GM10248 (cell line): ENCODE measurements at regions of chr7 and their contacts with region 1.

Region 1: DNA sequence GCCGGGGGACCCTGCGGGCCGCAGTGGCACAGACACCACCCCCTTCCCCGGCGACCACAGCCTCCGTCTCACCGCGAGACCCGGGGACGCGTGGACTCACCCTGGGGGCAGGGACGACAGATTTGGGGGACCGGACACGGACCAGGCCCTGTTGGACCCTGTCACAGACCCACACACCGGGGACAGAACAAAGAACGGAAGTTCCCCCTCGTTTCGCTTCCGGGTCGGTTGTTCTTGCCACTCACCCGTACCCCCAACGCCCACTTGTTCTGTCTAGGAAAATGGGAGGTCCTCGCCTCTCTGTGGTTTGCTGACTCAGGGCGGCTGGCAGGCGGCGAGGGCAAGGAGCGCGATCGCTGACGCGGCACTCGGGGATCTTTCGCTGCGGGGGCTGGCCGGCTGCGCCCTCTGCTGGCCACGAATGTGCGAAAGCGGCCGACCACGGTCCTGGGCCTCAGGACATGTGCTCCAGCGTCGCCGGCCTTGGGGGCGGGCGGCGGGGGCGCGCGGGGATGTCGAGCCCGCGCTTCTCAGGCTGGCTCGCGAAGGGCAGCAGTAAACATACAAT is at the start of gene ZNF3:
- DNase-seq: peak; percentile 97
- CTCF ChIP-seq: peak; percentile 92

Region 2: GRCh38 chr7:100040575-100040974 is 41.0 kb before region 1 on chr7:
- CTCF ChIA-PET with region 1: no interaction called
- POLR2A ChIA-PET with region 1: no interaction called
- DNase-seq: no peak
- CTCF ChIP-seq: no peak

Region 3: GRCh38 chr7:100071018-100071723 is 10.4 kb before region 1 on chr7:
- CTCF ChIA-PET with region 1: interaction called, 10 read pairs
- POLR2A ChIA-PET with region 1: no interaction called
- DNase-seq: no peak
- CTCF ChIP-seq: no peak

Region 4: GRCh38 chr7:100101016-100101862 is 19.6 kb after region 1 on chr7 and contains the starts of genes AP4M1 and MCM7:
- CTCF ChIA-PET with region 1: interaction called, 14 read pairs
- POLR2A ChIA-PET with region 1: interaction called, 4 read pairs
- DNase-seq: peak; percentile 99
- CTCF ChIP-seq: no peak

Region 5: DNA sequence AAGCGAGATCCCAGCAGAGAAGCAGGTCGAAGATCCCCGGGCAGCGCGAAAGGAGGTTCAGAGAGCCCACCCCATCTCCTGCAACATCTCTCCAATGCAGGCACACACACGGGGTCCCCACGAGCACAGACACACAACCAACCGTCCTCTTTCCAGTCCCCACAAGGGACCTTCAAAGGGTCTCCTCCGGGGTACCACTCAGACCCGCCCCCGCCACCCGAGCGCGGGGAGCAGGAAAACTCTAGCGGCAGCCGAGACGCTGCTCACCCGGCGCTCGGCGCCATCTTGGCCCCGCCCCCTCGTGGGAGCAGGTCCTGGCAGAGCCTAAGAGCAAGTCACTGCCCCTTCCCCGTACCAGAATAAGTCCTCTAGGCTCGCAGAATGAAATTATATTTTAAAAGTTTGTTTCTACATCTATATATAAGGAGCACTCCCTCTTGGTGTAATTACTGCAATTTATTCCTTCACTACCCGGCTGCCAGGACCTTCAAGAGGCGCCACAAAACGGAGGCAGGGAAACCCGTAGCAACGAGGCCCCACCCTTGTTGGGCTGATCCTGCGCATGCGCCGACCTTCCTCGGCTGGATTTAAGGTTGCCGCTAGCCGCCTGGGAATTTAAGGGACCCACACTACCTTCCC is 37.6 kb after region 1 on chr7 and contains the starts of genes CNPY4 and TAF6:
- CTCF ChIA-PET with region 1: no interaction called
- POLR2A ChIA-PET with region 1: no interaction called
- DNase-seq: peak; percentile 99
- CTCF ChIP-seq: no peak

Region 6: DNA sequence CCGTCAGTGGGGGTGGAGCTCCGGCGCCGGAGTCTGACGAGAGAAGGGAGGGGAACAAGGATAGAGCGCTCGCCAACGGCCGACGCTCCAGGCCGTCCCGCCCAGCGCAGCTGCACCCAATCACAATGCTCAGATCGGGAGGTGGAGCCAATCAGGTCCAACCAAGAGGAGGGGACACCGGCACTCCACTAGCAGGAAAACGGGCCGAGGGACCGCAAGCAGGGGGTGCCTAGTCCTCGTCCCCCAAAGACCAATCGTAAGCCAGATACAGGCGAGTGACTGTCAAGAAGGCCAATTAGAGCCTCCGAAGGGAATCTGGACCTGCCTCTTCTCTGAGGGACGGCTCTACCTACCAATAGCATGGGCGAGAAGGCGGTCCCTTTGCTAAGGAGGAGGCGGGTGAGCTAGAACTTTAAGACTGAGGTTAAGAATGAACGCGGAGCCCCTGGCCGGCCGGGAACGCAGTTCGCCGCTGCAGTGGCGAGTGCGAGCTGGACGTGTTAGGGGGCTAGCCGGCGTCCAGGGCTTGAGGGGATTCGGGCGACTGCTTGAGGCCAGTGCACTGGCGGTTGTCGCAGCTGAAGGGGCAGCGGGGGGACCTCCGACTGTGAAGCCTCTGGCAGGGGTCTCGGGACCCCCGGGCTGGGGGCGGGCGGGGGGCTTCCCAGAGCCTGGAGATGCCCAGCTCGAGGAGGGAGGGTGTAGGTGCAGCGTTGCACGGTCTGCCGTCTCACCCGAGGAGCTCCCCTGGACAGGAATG is 504.8 kb after region 1 on chr7 and contains the start of gene FBXO24:
- CTCF ChIA-PET with region 1: no interaction called
- POLR2A ChIA-PET with region 1: no interaction called
- DNase-seq: peak; percentile 100
- CTCF ChIP-seq: no peak